OCI-LY7 (cell line): ENCODE measurements at regions of chr15 and their contacts with region 1.

Region 1: GRCh38 chr15:74781431-74782258 is at the start of gene CSK:
- DNase-seq: peak; percentile 89
- H3K4me3 ChIP-seq: peak within 1 kb of the TSS; percentile 97
- H3K27ac ChIP-seq: peak within 1 kb of the TSS; percentile 99
- H3K4me1 ChIP-seq: peaks cover 72% of the 10 kb centered on the region
- CTCF ChIP-seq: peak; percentile 55
- total RNA-seq, gene CSK: 106 and 112 TPM in 2 replicates

Region 2: DNA sequence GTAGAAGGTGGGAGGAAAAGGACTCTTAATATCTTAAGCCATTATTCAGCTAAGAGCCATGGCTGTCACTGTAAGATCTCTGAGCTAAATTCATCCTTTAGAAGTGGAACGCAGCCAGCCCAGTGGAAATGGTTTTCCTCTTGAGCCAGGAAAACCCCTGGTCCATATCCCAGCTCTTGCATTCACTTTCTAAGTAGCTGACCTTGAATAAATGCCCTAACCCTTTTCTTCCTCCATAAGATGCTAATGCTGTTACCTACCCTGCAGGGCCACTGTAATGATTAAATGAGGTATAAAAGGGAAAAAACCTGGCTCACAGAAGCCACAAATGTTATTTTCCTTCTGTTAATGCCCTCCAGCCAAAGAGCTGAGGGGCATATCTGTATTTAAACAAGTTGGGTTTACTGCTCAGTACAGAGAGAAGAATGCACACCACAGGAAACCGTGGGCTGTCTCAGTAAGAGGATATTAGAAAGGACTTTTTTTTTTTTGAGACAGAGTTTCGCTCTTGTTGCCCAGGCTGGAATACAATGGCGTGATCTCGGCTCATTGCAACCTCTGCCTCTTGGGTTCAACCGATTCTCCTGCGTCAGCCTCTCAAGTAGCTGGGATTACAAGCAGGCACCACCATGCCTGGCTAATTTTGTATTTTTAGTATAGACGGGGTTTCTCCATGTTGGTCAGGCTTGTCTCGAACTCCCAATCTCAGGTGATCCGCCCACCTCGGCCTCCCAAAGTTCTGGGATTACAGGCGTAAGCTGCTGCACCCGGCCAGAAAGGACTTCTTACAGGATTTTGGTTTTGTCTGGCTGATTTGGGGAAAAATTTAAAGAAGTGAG is 327.5 kb before region 1 on chr15:
- CTCF ChIA-PET with region 1: no interaction called
- POLR2A ChIA-PET with region 1: no interaction called
- intact Hi-C with region 1: no loop called
- DNase-seq: no peak
- H3K4me3 ChIP-seq: no peak overlapping the region
- H3K27ac ChIP-seq: no peak overlapping the region
- H3K4me1 ChIP-seq: no peaks in the 10 kb centered on the region
- CTCF ChIP-seq: no peak

Region 3: GRCh38 chr15:74763416-74763815 is 18.2 kb before region 1 on chr15:
- CTCF ChIA-PET with region 1: no interaction called
- POLR2A ChIA-PET with region 1: no interaction called
- intact Hi-C with region 1: no loop called
- DNase-seq: no peak
- H3K4me3 ChIP-seq: no peak overlapping the region
- H3K27ac ChIP-seq: no peak overlapping the region
- H3K4me1 ChIP-seq: no peaks in the 10 kb centered on the region
- CTCF ChIP-seq: no peak

Region 4: GRCh38 chr15:74793135-74794028 is 11.7 kb after region 1 on chr15:
- CTCF ChIA-PET with region 1: interaction called, 40 read pairs
- POLR2A ChIA-PET with region 1: interaction called, 221 read pairs
- intact Hi-C with region 1: loop called (anchors 1 kb)
- DNase-seq: peak; percentile 63
- H3K4me3 ChIP-seq: peak overlapping the region; percentile 97
- H3K27ac ChIP-seq: peak overlapping the region; percentile 99
- H3K4me1 ChIP-seq: peaks cover 98% of the 10 kb centered on the region
- CTCF ChIP-seq: peak; percentile 81

Region 5: DNA sequence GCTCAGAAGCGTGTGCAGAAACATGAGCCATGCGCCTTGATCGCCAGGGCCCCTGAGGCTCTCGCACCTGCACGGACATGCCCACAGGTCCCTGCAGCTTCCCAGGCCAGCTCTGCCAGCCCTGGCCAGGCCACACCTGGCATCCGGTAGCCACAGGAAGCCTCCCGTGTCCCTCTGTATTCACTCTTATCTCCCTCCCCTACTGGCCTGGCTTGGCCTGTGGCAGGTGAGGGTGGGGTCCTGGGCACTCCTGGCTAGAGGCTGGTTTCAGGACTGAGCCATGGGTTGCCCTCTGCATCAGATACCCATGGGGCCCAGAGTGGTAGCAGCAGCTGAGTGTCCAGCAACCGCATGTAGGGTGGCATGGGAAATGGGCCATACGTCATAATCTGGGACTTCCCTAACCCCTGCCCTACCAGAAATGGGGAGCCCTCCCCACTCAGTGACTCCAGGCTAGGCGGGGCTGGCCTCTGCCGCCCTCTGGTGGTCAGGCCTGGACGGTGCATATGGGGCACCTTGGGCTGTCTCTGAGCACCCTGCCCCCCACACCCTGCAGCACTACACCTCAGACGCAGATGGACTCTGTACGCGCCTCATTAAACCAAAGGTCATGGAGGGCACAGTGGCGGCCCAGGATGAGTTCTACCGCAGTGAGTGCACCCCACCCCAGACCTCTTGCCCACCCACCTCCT is 18.4 kb after region 1 on chr15:
- CTCF ChIA-PET with region 1: interaction called, 8 read pairs
- POLR2A ChIA-PET with region 1: interaction called, 9 read pairs
- intact Hi-C with region 1: loop called (anchors 1 kb)
- DNase-seq: peak; percentile 77
- H3K4me3 ChIP-seq: no peak overlapping the region
- H3K27ac ChIP-seq: peak overlapping the region; percentile 61
- H3K4me1 ChIP-seq: peaks cover 55% of the 10 kb centered on the region
- CTCF ChIP-seq: peak; percentile 88

Region 6: GRCh38 chr15:74842581-74843444 is 61.2 kb after region 1 on chr15 and contains the start of gene ULK3:
- CTCF ChIA-PET with region 1: no interaction called
- POLR2A ChIA-PET with region 1: no interaction called
- intact Hi-C with region 1: no loop called
- DNase-seq: peak; percentile 91
- H3K4me3 ChIP-seq: peak within 1 kb of the TSS; percentile 73
- H3K27ac ChIP-seq: peak within 1 kb of the TSS; percentile 47
- H3K4me1 ChIP-seq: peaks cover 35% of the 10 kb centered on the region
- CTCF ChIP-seq: peak; percentile 68
- total RNA-seq, gene ULK3: 22.2 and 31.7 TPM in 2 replicates

Region 7: GRCh38 chr15:74976159-74976558 is 194.5 kb after region 1 on chr15:
- CTCF ChIA-PET with region 1: no interaction called
- POLR2A ChIA-PET with region 1: no interaction called
- intact Hi-C with region 1: no loop called
- DNase-seq: no peak
- H3K4me3 ChIP-seq: no peak overlapping the region
- H3K27ac ChIP-seq: no peak overlapping the region
- H3K4me1 ChIP-seq: no peaks in the 10 kb centered on the region
- CTCF ChIP-seq: peak; percentile 59